B cell (primary cell): ENCODE measurements at regions of chr7 and their contacts with region 1.

Region 1: DNA sequence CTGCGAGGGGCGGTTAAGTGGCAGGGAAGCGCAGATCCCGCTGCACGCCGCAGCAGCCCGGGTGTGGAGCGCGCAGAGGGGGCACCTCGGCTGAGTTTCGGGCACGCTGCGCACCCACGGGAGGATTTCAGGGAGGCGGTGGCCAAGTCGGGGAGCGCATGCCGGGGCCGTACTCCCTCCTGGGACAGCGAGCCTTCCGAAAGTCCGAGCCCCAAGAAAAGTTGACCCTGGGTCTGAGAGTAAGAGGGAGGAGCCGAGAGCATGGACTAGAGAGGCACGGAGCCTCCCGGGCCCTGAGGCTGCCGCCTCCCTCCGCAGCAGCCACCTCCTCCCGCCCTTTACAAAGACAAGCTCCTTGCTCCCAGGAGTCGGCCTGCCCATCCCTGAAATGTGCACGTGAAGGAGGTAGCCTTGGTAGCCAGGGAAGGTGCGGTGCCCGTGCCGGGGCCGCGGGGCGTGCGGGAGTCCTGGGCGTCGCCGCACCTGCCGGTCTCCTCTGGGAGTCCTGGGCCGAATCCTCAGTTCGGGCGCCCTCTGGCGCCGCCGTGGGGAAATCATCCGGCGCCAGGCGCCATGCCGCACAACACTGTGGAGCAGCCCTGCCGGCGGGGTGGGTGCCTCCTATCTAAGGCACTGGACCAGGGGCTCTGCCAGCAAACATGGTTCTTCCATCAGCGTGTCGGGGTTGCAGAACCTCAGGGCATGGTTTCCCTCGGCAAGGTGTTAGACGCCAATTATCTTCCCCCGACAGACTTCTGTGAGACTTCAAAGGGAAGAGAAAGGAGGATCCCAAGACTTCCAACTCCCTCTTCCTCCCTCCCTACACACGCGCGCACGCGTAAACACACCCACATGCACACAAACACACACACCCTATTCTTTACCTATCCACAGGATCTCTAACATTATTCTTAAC is 104.0 kb downstream of the TRIL start:
- DNase-seq: peak; percentile 86
- ATAC-seq: peak; percentile 97
- H3K4me3 ChIP-seq: peak overlapping the region; percentile 9 to 94 (median 58)
- H3K4me3 Mint-ChIP-seq: peak overlapping the region; percentile 88
- H3K27ac ChIP-seq: no peak overlapping the region
- H3K27ac Mint-ChIP-seq: peak overlapping the region; percentile 33
- H3K4me1 ChIP-seq: peaks cover 11 to 14% of the 10 kb centered on the region in 2 donors
- H3K4me1 Mint-ChIP-seq: peaks cover 9% of the 10 kb centered on the region
- H3K27me3 ChIP-seq: peaks cover 0 to 17% (median 10%) of the 10 kb centered on the region in 4 experiments
- H3K27me3 Mint-ChIP-seq: peaks cover 55% of the 10 kb centered on the region
- CTCF ChIP-seq: peak; percentile 88

Region 2: DNA sequence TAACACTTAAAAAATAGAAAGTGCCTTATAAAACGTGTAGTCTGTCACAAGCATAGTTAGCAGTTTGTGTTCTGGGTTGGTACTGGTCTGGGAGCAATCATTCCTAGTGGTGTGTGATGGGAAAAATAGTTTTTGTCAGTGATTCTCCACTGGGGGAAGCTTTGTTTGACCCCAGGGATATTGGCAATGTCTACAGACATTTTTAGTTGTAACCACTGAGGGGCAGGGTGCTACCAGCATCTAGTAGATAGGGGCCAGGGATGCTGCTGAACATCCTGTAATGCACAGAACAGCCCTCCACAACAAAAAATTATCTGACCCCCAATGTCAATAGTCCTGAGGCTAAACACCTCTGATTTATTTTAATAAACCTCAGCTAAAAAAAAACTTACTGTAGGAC is 493.4 kb before region 1 on chr7:
- CTCF ChIA-PET with region 1: interaction called, 5 read pairs
- POLR2A ChIA-PET with region 1: no interaction called
- intact Hi-C with region 1: loop called (anchors 1 kb)
- DNase-seq: no peak
- ATAC-seq: no peak
- H3K4me3 ChIP-seq: no peak overlapping the region
- H3K4me3 Mint-ChIP-seq: no peak overlapping the region
- H3K27ac ChIP-seq: no peak overlapping the region
- H3K27ac Mint-ChIP-seq: no peak overlapping the region
- H3K4me1 ChIP-seq: peaks cover 0 to 4% of the 10 kb centered on the region in 2 donors
- H3K4me1 Mint-ChIP-seq: peaks cover 5% of the 10 kb centered on the region
- H3K27me3 ChIP-seq: no peaks in the 10 kb centered on the region
- H3K27me3 Mint-ChIP-seq: peaks cover 11% of the 10 kb centered on the region
- CTCF ChIP-seq: no peak

Region 3: DNA sequence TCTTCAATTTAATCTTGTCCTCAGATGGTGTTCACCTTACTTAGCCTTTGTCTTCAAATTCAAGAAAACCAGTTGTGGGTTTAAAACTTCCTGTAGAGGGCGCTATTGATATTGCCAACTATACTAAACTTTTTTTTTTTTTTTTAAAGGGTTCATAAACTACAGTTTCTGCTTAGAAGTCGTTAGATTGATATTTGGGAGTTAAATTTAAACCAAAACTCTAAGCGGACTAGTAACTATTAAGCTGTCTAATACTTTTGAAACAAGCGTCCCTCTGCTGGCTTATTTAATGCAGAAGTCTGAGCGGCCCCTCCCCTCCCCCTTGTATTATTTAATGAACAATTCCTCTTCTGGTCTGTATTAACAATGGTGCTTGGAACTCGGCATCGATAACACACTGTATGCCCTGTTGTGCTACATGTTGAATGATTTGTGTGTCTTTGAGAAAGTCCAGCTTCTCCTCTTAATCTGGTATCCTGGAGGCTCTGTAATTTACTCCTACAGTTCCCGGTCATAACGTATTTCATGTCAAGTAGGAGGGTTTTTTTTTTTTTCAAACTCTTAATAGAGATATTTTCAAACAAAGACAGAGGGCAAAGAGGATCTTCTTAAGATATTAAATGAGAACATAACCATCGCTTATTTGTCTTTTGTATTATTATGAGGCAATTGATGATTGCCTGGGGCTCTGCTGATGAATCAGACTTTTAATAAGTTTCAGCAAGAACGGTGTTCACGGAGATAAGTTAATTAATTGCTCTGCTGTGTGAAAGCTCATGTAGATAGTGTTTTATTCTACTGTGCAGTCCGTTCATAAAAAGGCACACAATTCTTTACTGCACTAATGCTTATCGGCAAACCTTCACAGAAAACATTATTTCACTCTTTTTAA is 464.3 kb before region 1 on chr7:
- CTCF ChIA-PET with region 1: interaction called, 19 read pairs
- POLR2A ChIA-PET with region 1: no interaction called
- intact Hi-C with region 1: loop called (anchors 1 kb)
- DNase-seq: peak; percentile 71
- ATAC-seq: peak; percentile 33
- H3K4me3 ChIP-seq: no peak overlapping the region
- H3K4me3 Mint-ChIP-seq: no peak overlapping the region
- H3K27ac ChIP-seq: no peak overlapping the region
- H3K27ac Mint-ChIP-seq: no peak overlapping the region
- H3K4me1 ChIP-seq: peaks cover 3 to 4% of the 10 kb centered on the region in 2 donors
- H3K4me1 Mint-ChIP-seq: peaks cover 2% of the 10 kb centered on the region
- H3K27me3 ChIP-seq: peaks cover 0 to 13% (median 6%) of the 10 kb centered on the region in 4 experiments
- H3K27me3 Mint-ChIP-seq: peaks cover 36% of the 10 kb centered on the region
- CTCF ChIP-seq: peak; percentile 90

Region 4: DNA sequence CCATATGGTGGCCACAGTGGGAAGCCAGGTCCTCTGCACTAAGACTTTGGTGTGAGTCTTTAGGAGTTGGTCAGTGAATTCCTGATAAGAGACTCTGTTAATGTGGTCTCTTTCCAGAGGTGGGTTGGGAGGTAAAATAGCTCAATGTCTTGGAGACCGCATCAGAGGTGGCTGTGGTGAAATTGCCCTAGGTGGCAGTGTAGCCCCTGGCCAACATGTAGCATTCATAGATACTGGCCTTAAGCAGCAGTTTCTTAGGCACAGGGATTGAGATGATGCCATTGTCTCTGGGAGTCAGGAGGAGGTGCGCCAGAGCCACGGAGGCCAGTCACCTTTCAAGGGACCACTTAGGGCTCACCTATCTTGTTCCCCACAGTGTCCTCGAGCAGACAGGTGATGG is 239.0 kb before region 1 on chr7:
- CTCF ChIA-PET with region 1: interaction called, 12 read pairs
- POLR2A ChIA-PET with region 1: no interaction called
- intact Hi-C with region 1: loop called (anchors 1 kb)
- DNase-seq: peak; percentile 28
- ATAC-seq: no peak
- H3K4me3 ChIP-seq: no peak overlapping the region
- H3K4me3 Mint-ChIP-seq: no peak overlapping the region
- H3K27ac ChIP-seq: no peak overlapping the region
- H3K27ac Mint-ChIP-seq: no peak overlapping the region
- H3K4me1 ChIP-seq: no peaks in the 10 kb centered on the region
- H3K4me1 Mint-ChIP-seq: no peaks in the 10 kb centered on the region
- H3K27me3 ChIP-seq: no peaks in the 10 kb centered on the region
- H3K27me3 Mint-ChIP-seq: no peaks in the 10 kb centered on the region
- CTCF ChIP-seq: peak; percentile 20

Region 5: GRCh38 chr7:28808796-28809527 is 45.1 kb before region 1 on chr7:
- CTCF ChIA-PET with region 1: interaction called, 10 read pairs
- POLR2A ChIA-PET with region 1: no interaction called
- intact Hi-C with region 1: loop called (anchors 1 kb)
- DNase-seq: peak; percentile 66
- ATAC-seq: peak; percentile 88
- H3K4me3 ChIP-seq: no peak overlapping the region
- H3K4me3 Mint-ChIP-seq: peak overlapping the region; percentile 72
- H3K27ac ChIP-seq: no peak overlapping the region
- H3K27ac Mint-ChIP-seq: peak overlapping the region; percentile 68
- H3K4me1 ChIP-seq: peaks cover 0 to 11% of the 10 kb centered on the region in 2 donors
- H3K4me1 Mint-ChIP-seq: peaks cover 17% of the 10 kb centered on the region
- H3K27me3 ChIP-seq: no peaks in the 10 kb centered on the region
- H3K27me3 Mint-ChIP-seq: no peaks in the 10 kb centered on the region
- CTCF ChIP-seq: peak; percentile 23

Region 6: DNA sequence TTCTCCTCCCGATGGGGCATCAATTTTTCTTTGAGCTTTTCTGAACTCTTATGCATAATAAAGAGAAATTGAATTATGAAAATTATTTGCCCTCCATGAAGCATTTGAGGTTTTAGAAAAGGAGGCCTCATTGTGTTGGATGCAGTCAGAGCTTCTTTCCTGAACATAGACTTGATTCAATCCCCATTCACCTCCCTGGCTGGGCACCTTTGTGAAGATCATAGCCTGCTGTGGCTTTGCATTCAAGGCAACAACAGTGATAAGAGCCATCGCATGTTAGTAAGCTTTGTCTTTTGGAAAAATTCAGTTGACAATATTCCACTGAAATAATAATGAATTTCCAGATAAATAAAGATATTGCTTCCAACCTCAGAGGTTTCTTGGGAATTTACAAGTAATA is 17.0 kb after region 1 on chr7:
- CTCF ChIA-PET with region 1: interaction called, 12 read pairs
- POLR2A ChIA-PET with region 1: no interaction called
- intact Hi-C with region 1: no loop called
- DNase-seq: no peak
- ATAC-seq: no peak
- H3K4me3 ChIP-seq: no peak overlapping the region
- H3K4me3 Mint-ChIP-seq: no peak overlapping the region
- H3K27ac ChIP-seq: no peak overlapping the region
- H3K27ac Mint-ChIP-seq: no peak overlapping the region
- H3K4me1 ChIP-seq: no peaks in the 10 kb centered on the region
- H3K4me1 Mint-ChIP-seq: no peaks in the 10 kb centered on the region
- H3K27me3 ChIP-seq: peaks cover 0 to 2% (median 0%) of the 10 kb centered on the region in 4 experiments
- H3K27me3 Mint-ChIP-seq: peaks cover 33% of the 10 kb centered on the region
- CTCF ChIP-seq: no peak

Region 7: GRCh38 chr7:29878081-29878688 is 1024.1 kb after region 1 on chr7:
- CTCF ChIA-PET with region 1: no interaction called
- POLR2A ChIA-PET with region 1: no interaction called
- intact Hi-C with region 1: no loop called
- DNase-seq: peak; percentile 59
- ATAC-seq: no peak
- H3K4me3 ChIP-seq: no peak overlapping the region
- H3K4me3 Mint-ChIP-seq: no peak overlapping the region
- H3K27ac ChIP-seq: no peak overlapping the region
- H3K27ac Mint-ChIP-seq: no peak overlapping the region
- H3K4me1 ChIP-seq: peaks cover 0 to under 1% of the 10 kb centered on the region in 2 donors
- H3K4me1 Mint-ChIP-seq: peaks cover 3% of the 10 kb centered on the region
- H3K27me3 ChIP-seq: peaks cover 0 to 3% (median 1%) of the 10 kb centered on the region in 4 experiments
- H3K27me3 Mint-ChIP-seq: peaks cover 25% of the 10 kb centered on the region
- CTCF ChIP-seq: peak; percentile 77